ENCODE measurements at regions of chr1 and their contacts with region 1.

Region 1: DNA sequence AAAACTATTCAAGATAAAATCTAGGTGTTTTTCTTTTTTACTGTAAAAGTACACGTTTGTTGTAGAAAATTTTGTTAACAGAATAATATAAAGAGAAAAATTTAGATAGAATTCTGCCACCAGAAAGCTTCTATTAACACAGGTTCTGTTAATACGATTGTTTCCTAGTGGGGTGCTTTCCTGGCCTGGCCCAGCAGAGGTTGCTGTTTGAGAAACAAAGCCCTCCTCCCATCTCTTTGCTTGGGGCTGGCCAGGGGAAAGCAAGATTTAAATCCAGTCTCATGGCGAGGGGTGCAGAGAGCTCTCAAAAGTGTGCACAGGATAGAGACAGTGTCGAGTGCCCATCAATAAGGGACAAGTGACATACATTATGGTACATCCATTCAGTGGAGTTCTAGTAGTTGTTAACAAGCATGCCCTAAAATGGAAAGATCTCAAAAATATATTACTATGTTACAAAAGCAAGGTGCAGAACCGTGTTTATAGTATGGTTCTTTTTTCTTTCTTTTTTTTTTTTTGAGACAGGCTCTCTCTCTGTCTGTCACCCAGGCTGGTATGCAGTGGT is 14.6 kb upstream of the ACBD3 start:
- DNase-seq: no peak
- H3K4me3 Mint-ChIP-seq: no peak overlapping the region
- H3K27ac Mint-ChIP-seq: no peak overlapping the region
- H3K4me1 Mint-ChIP-seq: peaks cover 2% of the 10 kb centered on the region
- H3K27me3 Mint-ChIP-seq: peaks cover 2% of the 10 kb centered on the region

Region 2: GRCh38 chr1:226004396-226004795 is 196.7 kb before region 1 on chr1:
- CTCF ChIA-PET with region 1: no interaction called
- POLR2A ChIA-PET with region 1: no interaction called
- intact Hi-C with region 1: no loop called
- DNase-seq: no peak
- H3K4me3 Mint-ChIP-seq: no peak overlapping the region
- H3K27ac Mint-ChIP-seq: peak overlapping the region; percentile 24
- H3K4me1 Mint-ChIP-seq: peaks cover 39% of the 10 kb centered on the region
- H3K27me3 Mint-ChIP-seq: no peaks in the 10 kb centered on the region

Region 3: GRCh38 chr1:226154593-226154992 is 46.5 kb before region 1 on chr1:
- CTCF ChIA-PET with region 1: no interaction called
- POLR2A ChIA-PET with region 1: no interaction called
- intact Hi-C with region 1: no loop called
- DNase-seq: no peak
- H3K4me3 Mint-ChIP-seq: no peak overlapping the region
- H3K27ac Mint-ChIP-seq: no peak overlapping the region
- H3K4me1 Mint-ChIP-seq: peaks cover 9% of the 10 kb centered on the region
- H3K27me3 Mint-ChIP-seq: no peaks in the 10 kb centered on the region

Region 4: GRCh38 chr1:226176870-226177269 is 24.2 kb before region 1 on chr1:
- CTCF ChIA-PET with region 1: interaction called, 10 read pairs
- POLR2A ChIA-PET with region 1: no interaction called
- intact Hi-C with region 1: no loop called
- DNase-seq: no peak
- H3K4me3 Mint-ChIP-seq: no peak overlapping the region
- H3K27ac Mint-ChIP-seq: no peak overlapping the region
- H3K4me1 Mint-ChIP-seq: peaks cover 48% of the 10 kb centered on the region
- H3K27me3 Mint-ChIP-seq: no peaks in the 10 kb centered on the region

Region 5: DNA sequence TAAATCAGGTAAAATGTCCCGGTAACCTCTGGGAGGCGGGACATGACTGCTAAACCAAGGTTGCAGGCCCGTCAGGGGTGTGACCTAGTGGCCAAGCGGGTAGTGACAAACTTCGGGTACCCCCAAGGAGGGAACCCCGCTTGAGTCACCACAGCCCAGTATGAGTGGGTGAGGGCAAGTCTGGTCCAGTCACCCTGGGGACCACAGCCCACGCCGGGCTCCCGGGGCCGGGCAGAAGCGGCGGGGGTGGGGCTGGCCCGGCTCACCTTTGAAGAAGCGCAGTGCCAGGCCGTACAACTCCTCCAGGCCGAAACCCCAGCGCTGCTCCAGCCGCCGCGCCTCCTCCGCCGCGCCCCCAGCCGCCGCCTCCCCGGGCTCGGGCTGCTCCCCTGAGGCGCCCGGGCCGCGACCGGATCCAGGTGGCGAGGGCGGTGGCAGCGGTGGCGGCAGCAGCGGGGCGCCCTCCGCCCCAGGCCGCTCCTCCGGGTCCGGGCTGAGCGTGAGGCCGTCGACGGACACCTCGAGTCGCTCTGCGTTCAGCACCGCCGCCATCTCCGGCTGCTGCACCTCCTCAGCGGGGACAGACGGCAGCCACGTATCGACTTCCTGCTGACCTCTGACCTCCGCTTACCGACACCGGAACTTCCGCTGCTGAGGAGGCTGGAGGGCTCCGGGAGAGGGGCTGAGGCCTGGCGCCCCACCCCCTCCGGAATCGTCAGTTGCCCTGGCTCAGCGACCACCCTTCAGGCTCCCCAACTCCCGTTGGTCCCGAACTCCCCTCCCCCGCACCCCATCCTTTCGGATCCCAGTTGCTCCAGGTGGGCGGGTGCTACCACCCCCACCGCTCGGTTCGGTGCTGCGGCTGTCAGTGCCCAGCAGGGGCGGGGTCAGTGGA is 14.7 kb before region 1 on chr1 and contains the start of gene ACBD3:
- CTCF ChIA-PET with region 1: interaction called, 19 read pairs
- POLR2A ChIA-PET with region 1: no interaction called
- intact Hi-C with region 1: no loop called
- DNase-seq: peak; percentile 91
- H3K4me3 Mint-ChIP-seq: peak within 1 kb of the TSS; percentile 93
- H3K27ac Mint-ChIP-seq: peak within 1 kb of the TSS; percentile 91
- H3K4me1 Mint-ChIP-seq: peaks cover 34% of the 10 kb centered on the region
- H3K27me3 Mint-ChIP-seq: no peaks in the 10 kb centered on the region
- total RNA-seq, gene ACBD3: 18.7 to 20.7 TPM

Region 6: DNA sequence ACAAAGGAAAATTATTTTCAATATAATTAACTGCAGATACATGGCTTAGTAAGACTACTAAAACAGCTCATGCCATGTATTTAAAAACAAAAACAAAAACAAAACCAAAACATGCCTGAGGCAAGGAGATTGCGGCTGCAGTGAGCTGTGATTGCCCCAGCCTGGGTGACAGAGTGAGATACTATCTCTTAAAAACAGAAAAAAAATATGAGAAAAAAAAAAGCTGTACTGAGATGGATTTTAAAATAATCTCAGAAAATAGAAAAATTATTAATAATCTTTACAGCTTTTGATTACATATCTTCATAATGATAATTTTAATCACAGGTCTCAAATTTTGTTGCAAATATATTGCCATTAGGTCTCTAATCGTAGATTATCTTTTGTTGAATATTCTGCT is 131.8 kb after region 1 on chr1:
- CTCF ChIA-PET with region 1: interaction called, 11 read pairs
- POLR2A ChIA-PET with region 1: interaction called, 3 read pairs
- intact Hi-C with region 1: loop called (anchors 1 kb)
- DNase-seq: no peak
- H3K4me3 Mint-ChIP-seq: no peak overlapping the region
- H3K27ac Mint-ChIP-seq: no peak overlapping the region
- H3K4me1 Mint-ChIP-seq: peaks cover 15% of the 10 kb centered on the region
- H3K27me3 Mint-ChIP-seq: no peaks in the 10 kb centered on the region